Right lobe of liver (tissue), 6 donors: ENCODE measurements at regions of chr14 and their contacts with region 1.

Region 1: DNA sequence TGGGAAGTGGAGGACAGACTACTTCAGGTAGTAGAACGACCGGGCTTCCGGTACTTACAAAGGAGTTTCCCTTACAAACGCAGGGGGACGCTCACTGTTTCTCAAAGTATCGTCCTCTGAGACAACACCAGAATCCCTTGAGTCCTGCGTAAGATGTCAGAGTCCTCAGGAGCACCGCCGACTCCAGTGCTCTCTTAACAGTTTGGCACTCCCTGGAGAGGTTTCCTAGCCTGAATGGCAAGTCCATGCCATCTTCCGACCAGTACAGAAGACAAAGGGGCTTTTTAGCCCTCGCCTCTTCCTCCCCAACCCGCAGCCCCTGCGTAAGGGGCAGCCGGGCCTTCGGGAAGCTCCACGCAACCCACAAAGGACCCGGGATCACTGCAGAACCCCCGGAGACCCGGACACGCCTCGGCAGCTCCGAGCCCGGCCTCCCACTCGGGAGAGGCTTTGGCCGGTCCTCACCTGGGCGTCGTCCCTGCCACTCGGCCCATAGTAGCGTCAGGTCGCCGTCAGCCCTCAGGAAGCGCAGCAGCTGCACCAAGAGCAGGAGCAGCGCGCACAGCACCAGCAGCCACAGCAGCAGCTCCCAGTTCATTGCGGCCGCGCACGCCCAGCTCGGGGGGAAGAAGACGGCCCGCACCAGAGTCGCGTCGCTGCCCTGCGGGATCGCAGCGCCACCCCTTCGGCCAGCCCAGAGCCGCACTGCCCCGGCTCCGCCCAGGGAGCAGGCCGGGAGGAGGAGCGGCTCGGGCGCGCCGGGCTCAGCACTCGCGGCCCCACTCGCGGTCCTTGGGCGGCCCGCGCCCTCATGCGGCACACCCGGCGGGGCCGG is at the start of gene DHRS7:
- DNase-seq: peak; percentile 91 to 94 (median 93)
- ATAC-seq: peak; percentile 95 to 99 (median 97)
- H3K4me3 ChIP-seq: peak within 1 kb of the TSS; percentile 63 to 80 (median 70)
- H3K27ac ChIP-seq: peak within 1 kb of the TSS; percentile 86 to 95 (median 90)
- H3K4me1 ChIP-seq: peaks cover 0 to 21% (median 2%) of the 10 kb centered on the region in 4 donors
- H3K27me3 ChIP-seq: no peaks in the 10 kb centered on the region
- CTCF ChIP-seq: peak; percentile 31 to 73 (median 73)
- POLR2A ChIP-seq: peak; percentile 83
- total RNA-seq, gene DHRS7: 65.0 to 153 (median 116) TPM

Region 2: DNA sequence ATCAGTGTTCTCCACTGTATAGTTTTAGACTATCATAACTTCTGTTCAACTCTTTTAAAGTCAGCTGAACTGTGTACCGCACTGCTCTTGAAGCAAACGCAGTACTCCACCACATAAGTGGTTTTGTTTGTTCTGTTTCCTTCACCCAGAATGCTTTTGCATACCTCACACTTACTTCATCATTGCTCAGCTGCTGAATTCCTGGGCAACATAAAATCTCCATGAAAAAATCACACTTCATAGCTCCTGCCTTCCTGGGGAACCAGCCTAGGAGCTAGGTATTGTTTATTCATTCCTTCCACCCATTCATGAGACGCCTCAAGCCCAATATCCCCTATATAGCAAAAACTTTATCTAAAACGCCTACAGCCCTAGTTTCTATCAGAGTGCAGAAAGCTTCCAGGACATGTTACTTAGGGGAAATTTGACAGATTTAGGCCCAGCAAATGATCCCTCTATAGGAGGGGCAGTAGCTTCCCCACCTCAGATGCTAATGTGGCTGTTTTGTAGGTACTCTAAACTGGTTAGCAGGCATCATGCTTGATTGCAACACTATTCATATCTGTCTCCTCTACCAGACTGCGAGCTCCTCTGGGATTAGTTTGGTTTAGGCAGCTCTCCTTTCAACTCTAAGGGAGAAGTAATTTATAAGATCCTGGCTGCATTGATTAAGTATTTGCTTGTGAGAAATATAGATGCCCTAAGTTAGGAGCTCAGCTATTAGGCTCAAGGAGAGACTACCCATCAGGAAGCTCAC is 200.5 kb before region 1 on chr14:
- intact Hi-C with region 1: loop called in 1 of 2 experiments (anchors 10 kb)
- DNase-seq: no peak
- ATAC-seq: peak in 3 of 4 donors; percentile 13 to 22 (median 14)
- H3K4me3 ChIP-seq: no peak overlapping the region
- H3K27ac ChIP-seq: no peak overlapping the region
- H3K4me1 ChIP-seq: no peaks in the 10 kb centered on the region
- H3K27me3 ChIP-seq: no peaks in the 10 kb centered on the region
- CTCF ChIP-seq: no peak
- POLR2A ChIP-seq: no peak

Region 3: DNA sequence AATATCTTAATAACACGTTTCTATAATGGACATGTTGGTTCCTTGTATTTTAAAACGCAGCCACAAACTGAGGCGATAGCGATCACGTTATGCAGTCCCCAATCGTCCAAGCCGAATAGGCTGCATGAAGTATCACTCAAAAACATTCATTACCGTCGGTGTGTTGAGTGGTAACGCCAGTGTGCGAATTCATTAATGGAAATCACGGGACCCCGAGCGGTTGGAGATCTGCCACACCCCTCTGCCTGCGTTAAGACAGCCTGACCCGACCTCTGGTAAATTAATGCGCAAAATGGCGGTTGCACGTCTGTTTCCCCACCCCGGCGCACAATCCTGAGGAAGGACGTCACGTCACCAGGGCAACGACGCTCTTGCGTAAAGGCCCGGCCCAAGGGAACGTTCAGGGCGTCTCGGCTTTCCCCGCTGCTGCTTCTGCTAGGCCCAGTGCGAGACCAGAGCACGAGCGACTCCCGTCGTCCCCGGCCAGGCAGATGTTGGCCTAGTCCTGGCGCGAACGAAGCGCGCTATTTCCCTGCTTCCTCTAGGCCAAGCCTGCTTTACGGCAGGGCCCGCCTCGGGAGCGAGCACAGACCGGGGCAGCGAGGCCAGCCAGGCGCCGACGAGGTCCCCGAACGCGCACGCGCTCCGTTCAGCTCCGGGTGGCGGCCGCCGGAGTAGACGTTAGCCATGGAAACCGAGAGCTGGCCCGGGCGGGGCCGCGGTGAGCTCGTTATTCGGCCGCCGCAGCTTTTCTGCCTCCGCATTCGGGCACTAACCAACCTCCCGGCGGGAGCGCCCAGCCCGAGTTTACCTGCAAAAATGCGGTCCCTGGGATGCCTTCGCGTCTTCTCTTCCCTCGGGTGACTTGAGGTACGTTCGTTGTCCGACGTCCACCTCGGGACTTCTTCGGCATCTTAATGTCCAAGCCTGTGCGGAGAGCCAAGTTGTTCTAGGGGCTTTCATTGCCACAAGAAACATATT is 73.1 kb before region 1 on chr14 and contains the start of gene PCNX4:
- intact Hi-C with region 1: loop called in 1 of 2 experiments (anchors 10 kb)
- DNase-seq: peak; percentile 96 to 98 (median 98)
- ATAC-seq: peak; percentile 94 to 98 (median 96)
- H3K4me3 ChIP-seq: peak within 1 kb of the TSS; percentile 66 to 73 (median 66)
- H3K27ac ChIP-seq: peak within 1 kb of the TSS; percentile 96 to 99 (median 98)
- H3K4me1 ChIP-seq: peaks cover 0 to 4% (median 0%) of the 10 kb centered on the region in 4 donors
- H3K27me3 ChIP-seq: no peaks in the 10 kb centered on the region
- CTCF ChIP-seq: peak in 1 of 4 donors; percentile 4
- POLR2A ChIP-seq: peak; percentile 95
- total RNA-seq, gene PCNX4: 14.2 to 36.4 (median 17.8) TPM